HEK293T (cell line): ENCODE measurements at regions of chr9 and their contacts with region 1.

Region 1: GRCh38 chr9:77751341-77752091 is 103.4 kb upstream of the GNA14 start:
- DNase-seq: peak; percentile 49

Region 2: GRCh38 chr9:77469515-77470231 is 281.8 kb before region 1 on chr9:
- CTCF ChIA-PET with region 1: interaction called, 10 read pairs
- POLR2A ChIA-PET with region 1: no interaction called
- DNase-seq: no peak

Region 3: DNA sequence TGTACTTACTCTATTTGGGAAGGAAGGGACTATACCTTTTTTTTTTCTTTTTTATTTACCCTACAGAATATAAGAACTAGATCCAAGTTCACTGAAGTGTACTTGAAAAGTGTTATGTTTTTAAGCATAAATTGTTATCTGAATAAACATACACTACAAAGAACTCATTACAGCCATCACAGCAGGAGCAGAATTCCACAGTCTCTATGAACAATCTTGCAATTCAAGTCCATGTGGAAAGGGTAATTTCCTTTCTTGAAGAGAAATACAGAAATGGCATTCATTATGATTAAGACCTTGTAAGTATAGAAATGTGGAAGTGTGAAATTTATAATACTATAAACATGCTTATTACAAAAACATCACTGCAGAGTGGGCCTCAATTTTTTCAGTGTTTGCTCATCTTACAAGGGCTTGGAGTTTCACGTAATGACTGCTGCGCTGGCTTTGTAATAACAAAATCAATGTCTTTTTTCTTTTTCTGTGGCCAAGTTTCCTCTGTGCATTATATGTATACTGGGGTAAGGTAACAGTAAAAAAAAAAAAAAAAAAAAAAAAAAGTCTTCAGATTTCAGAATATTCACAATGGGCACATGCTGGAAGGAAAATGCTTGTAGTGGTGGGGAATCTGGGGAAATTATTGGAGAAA is 26.3 kb before region 1 on chr9:
- CTCF ChIA-PET with region 1: no interaction called
- POLR2A ChIA-PET with region 1: no interaction called
- DNase-seq: no peak

Region 4: DNA sequence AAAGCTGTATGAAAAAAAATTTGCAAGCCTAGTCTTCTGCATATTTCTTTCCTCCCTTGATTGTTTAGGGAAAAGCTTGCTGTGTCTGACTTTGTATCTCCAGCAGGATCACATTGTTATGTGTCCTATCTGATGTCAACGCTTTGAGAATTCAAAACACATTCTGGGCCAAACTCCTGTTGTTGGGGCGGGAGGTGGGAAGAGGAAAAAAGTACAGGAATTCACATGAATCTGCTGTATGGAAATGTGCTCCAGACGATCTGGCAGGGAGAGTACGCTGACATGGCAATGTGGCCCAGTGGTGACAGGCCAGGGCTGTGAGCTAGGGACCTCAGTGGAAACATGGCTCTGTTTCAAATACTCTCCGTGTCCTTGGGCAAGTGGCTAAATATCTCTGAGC is 16.0 kb before region 1 on chr9:
- CTCF ChIA-PET with region 1: no interaction called
- POLR2A ChIA-PET with region 1: no interaction called
- DNase-seq: no peak

Region 5: GRCh38 chr9:77793904-77794303 is 42.4 kb after region 1 on chr9:
- CTCF ChIA-PET with region 1: no interaction called
- POLR2A ChIA-PET with region 1: no interaction called
- DNase-seq: no peak